IMR-90 (cell line): ENCODE measurements at regions of chr16 and their contacts with region 1.

Region 1: GRCh38 chr16:49855280-49855821 is 561 bp downstream of the ZNF423 start:
- DNase-seq: peak; percentile 31
- ATAC-seq: peak; percentile 77
- H3K4me3 ChIP-seq: peak overlapping the region; percentile 71
- H3K27ac ChIP-seq: no peak overlapping the region
- H3K4me1 ChIP-seq: peaks cover 2% of the 10 kb centered on the region; the same call in 1 of the 2 replicates
- H3K27me3 ChIP-seq: peaks cover 66% of the 10 kb centered on the region
- CTCF ChIP-seq: no peak
- POLR2A ChIP-seq: no peak
- RAD21 ChIP-seq: no peak

Region 2: GRCh38 chr16:49491771-49492761 is 363.3 kb before region 1 on chr16:
- CTCF ChIA-PET with region 1: no interaction called
- POLR2A ChIA-PET with region 1: no interaction called
- dilution Hi-C with region 1: no loop called
- in situ Hi-C with region 1: no loop called
- intact Hi-C with region 1: loop called (anchors 5 kb)
- DNase-seq: no peak
- ATAC-seq: peak; percentile 93
- H3K4me3 ChIP-seq: no peak overlapping the region
- H3K27ac ChIP-seq: no peak overlapping the region
- H3K4me1 ChIP-seq: no peaks in the 10 kb centered on the region
- H3K27me3 ChIP-seq: no peaks in the 10 kb centered on the region
- CTCF ChIP-seq: peak; percentile 59
- POLR2A ChIP-seq: no peak
- RAD21 ChIP-seq: peak; percentile 37

Region 3: DNA sequence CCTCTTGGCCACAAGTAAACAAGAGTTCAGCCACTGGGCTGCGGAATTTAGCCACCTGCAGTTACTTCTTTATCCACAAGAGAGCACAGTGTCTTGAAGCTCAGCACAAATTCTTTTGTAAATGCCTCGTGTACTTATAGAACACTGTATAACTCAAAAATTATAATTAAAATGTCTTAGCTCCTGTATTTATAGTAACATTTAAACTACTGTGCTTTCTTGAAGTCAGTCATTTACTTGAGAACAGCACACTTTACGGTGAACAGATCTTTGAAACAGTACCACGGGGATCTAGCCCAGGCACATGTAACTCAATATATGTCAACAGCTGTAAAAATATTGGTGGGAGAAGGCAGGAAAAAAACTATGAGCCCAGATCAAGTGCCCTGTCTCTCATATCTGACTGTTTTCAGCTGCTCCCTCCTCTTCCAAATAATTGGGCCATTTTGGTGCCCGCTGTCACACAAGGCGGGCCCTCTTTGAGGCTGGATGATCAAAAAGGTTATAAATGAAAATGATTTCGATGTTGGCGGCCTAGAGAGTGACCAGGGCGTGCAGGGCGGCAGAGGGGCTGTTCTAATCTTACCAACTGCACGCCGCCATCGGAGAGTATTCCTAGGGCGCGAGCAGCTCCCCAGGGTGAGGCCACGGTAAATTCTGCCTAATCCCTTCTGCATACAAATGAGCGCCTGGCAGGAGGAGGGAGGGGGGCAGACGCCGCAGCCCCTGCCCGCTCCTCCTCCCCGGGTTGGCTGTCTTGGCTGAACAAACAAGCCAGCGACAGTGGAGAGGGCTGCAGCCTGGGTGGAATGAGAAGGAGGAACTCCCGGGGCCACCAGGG is 298.5 kb before region 1 on chr16:
- CTCF ChIA-PET with region 1: no interaction called
- POLR2A ChIA-PET with region 1: no interaction called
- dilution Hi-C with region 1: no loop called
- in situ Hi-C with region 1: no loop called
- intact Hi-C with region 1: loop called (anchors 2 kb)
- DNase-seq: peak; percentile 35
- ATAC-seq: peak; percentile 72
- H3K4me3 ChIP-seq: no peak overlapping the region
- H3K27ac ChIP-seq: no peak overlapping the region
- H3K4me1 ChIP-seq: no peaks in the 10 kb centered on the region
- H3K27me3 ChIP-seq: peaks cover 2% of the 10 kb centered on the region; the same call in 1 of the 2 replicates
- CTCF ChIP-seq: peak; percentile 34
- POLR2A ChIP-seq: no peak
- RAD21 ChIP-seq: peak; percentile 41

Region 4: DNA sequence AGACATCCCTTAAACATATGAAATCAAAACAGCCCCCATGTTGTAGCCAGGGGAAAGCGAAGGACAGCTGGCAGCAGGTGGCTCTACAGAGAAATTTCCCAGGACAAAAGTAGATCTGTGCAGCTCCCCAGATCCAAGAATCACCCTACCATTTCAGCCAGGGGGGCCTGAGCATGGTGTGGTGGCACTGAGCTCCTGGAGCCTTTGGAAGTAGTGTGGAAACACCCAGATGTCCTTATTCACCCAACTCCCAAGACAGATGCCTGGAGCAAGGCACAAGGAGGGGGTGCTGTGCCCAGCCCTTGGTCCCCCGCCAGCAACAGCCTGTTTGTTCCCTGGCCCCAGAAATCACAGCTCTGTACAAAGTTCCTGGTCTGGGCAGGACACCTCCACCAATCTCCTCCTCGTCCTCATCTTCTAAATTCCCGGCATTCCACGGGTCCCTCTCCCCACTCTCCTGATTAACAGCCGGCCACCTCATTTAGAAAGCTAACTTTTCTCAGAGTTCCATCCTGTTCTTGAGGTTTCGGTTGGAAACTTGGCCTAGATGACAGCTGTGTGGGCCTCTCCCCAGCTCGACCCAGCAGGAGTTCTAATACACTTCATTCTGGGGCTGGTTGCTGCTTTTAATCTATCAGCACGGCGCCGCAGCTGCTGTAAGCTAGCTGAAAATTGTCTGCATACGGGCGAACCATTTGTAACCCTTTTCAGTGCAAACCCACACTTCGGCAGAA is 290.7 kb before region 1 on chr16:
- CTCF ChIA-PET with region 1: no interaction called
- POLR2A ChIA-PET with region 1: interaction called, 11 read pairs
- dilution Hi-C with region 1: no loop called
- in situ Hi-C with region 1: no loop called
- intact Hi-C with region 1: no loop called
- DNase-seq: no peak
- ATAC-seq: no peak
- H3K4me3 ChIP-seq: no peak overlapping the region
- H3K27ac ChIP-seq: no peak overlapping the region
- H3K4me1 ChIP-seq: no peaks in the 10 kb centered on the region
- H3K27me3 ChIP-seq: peaks cover 9% of the 10 kb centered on the region; the same call in 1 of the 2 replicates
- CTCF ChIP-seq: no peak
- POLR2A ChIP-seq: no peak
- RAD21 ChIP-seq: no peak

Region 5: DNA sequence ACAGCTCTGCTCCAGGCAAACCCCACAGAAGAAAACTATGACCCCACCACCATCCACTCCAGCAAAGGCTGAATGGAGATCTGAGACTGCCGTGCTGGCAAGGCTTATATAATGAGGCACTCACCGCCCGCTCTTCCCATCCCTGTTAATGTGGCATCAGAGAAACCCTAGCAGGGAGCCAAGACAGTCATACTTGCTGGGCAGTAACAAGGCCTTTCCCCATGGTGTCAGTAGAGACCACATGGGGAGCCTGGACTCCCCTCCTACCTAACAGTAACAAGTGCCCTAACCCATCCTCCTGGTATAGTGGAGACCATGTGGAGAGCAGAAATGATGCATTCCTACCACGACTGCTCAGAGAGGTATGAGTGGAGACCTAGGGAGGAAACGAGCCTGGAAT is 246.6 kb before region 1 on chr16:
- CTCF ChIA-PET with region 1: no interaction called
- POLR2A ChIA-PET with region 1: no interaction called
- dilution Hi-C with region 1: no loop called
- in situ Hi-C with region 1: no loop called
- intact Hi-C with region 1: loop called (anchors 2 kb)
- DNase-seq: peak; percentile 61
- ATAC-seq: peak; percentile 89
- H3K4me3 ChIP-seq: no peak overlapping the region
- H3K27ac ChIP-seq: no peak overlapping the region
- H3K4me1 ChIP-seq: no peaks in the 10 kb centered on the region
- H3K27me3 ChIP-seq: peaks cover 18% of the 10 kb centered on the region; the same call in 1 of the 2 replicates
- CTCF ChIP-seq: peak; percentile 69
- POLR2A ChIP-seq: no peak
- RAD21 ChIP-seq: peak; percentile 79